Activated CD4-positive, alpha-beta T cell treated with anti-CD3 and anti-CD28 coated beads for 36 hours (primary cell): ENCODE measurements at regions of chr11 and their contacts with region 1.

Region 1: DNA sequence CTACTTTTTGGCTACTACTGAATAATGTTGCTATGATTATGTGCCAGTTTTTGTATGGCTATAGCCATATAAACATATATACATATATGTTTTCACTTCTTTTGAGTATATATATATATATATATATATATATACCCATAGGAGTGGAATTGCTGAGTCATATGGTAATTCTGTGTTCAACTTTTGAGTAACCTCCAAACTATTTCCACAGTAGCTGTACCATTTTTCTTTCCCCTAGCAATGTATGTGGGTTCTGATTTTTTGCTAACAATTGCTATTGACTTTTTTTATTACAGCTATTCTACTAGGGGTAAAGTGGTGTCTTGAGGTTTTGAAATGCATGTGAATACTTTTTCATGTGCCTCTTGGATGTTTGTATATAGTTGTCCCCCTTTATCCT is 30.4 kb downstream of the CBL start:
- DNase-seq: no peak
- ATAC-seq: peak; percentile 59
- H3K4me3 Mint-ChIP-seq: no peak overlapping the region
- H3K27ac Mint-ChIP-seq: peak overlapping the region; percentile 88
- H3K4me1 Mint-ChIP-seq: peaks cover 53% of the 10 kb centered on the region
- H3K27me3 Mint-ChIP-seq: no peaks in the 10 kb centered on the region

Region 2: DNA sequence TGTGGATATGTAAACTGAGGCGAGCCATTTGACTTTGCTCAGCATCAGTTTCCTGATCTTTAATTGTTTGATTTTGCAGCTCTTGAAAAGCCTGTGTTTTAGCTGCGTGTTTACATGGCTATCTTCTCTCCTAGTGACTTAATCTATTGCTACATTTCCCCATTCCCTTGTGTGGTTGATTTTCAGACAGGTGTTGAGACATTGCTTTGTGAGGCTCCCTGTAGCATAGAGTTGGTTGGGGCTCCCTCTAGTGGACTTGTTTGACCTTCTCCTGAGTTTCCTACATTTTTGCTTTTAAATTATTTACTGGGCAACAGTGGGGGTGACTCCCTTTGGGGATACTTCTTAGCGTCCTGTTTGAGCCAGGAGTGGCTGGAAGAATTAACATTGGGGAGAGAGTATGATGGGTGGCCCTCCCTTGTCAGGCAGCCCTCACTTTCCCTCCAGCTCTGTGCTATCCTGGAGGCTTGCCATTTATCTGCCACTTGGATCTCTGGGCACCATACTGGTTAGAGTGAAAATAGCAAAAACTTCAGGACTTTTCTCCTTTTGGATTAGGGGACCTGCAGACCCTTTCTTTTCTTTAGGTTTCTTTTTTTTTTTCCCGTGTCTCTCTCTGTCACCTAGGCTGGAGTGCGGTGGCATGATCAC is 39.5 kb before region 1 on chr11:
- CTCF ChIA-PET with region 1: no interaction called
- POLR2A ChIA-PET with region 1: no interaction called
- intact Hi-C with region 1: no loop called
- DNase-seq: peak; percentile 80
- ATAC-seq: peak; percentile 97
- H3K4me3 Mint-ChIP-seq: no peak overlapping the region
- H3K27ac Mint-ChIP-seq: no peak overlapping the region
- H3K4me1 Mint-ChIP-seq: peaks cover 2% of the 10 kb centered on the region
- H3K27me3 Mint-ChIP-seq: no peaks in the 10 kb centered on the region

Region 3: DNA sequence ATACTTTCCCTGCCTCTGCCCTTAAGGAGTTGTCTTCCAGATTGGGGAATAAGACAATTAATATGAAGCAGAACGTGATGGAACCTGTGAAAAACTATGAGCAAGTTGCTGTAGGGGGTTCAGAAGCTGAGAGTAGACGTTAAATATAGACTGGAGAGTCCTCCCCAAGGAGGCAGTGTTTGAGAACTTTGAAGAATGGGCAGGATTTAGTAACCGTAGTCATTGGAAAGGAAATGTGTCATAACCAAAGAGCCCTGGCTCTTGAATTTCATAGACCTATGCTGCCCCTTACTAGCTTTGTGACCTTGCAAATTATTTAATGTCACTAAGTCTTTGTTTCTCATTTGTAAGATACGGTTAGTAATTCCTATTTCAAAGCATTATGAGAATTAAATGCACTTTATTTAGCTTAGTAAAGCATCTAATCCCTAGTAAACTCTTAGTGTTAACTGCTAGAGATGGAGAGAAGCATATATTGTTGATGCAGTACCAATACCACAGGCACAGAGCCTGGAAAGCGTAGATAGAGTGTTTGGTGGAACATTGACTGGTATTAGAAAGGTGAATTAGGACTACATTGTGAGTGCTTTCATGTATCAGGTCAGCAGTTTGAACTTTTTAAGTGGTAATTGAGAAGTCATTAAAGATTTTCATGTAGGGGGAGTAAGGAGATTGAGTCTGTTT is 26.3 kb after region 1 on chr11:
- CTCF ChIA-PET with region 1: interaction called, 4 read pairs
- POLR2A ChIA-PET with region 1: no interaction called
- intact Hi-C with region 1: loop called (anchors 1 to 2 kb)
- DNase-seq: no peak
- ATAC-seq: peak; percentile 80
- H3K4me3 Mint-ChIP-seq: no peak overlapping the region
- H3K27ac Mint-ChIP-seq: no peak overlapping the region
- H3K4me1 Mint-ChIP-seq: peaks cover 66% of the 10 kb centered on the region
- H3K27me3 Mint-ChIP-seq: no peaks in the 10 kb centered on the region